ENCODE measurements at regions of chr12 and their contacts with region 1.

Region 1: DNA sequence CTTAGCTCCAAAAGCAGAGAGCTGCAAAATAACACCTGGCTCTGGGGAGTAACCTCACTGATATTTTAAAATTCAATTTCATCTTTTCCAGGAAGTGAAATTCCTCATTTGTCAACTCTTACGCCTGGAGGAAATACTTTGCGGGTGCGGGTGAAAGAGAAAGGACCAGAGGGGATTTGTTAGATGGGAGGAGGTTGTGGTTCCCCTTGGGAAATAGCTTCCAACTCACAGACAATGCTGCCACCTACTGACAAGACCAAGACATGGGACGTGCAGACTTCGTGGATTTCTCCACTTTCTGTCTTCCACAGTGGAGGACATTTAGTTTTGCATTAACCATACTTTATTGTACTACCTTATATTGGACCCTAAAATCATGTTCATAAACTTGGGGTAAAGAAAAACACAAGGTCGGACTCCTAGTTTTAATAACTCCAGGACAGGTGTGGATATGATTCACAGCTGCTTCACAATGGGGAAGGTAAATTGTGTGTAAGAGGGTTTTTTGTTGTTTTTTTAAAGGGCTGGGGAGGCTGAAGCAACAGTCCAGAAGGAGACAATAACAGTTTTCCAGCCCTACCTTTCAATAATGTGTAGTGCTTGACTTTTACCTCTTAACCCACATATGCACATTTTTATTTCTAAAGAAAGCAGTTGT is 10.8 kb downstream of the FBXL14 start:
- DNase-seq: peak; percentile 83
- ATAC-seq: peak; percentile 51
- H3K4me3 ChIP-seq: peak overlapping the region; percentile 38; the same call in 1 of the 2 replicates
- H3K27ac ChIP-seq: no peak overlapping the region
- H3K4me1 ChIP-seq: peaks cover 11% of the 10 kb centered on the region
- H3K27me3 ChIP-seq: no peaks in the 10 kb centered on the region
- CTCF ChIP-seq: peak; percentile 93

Region 2: DNA sequence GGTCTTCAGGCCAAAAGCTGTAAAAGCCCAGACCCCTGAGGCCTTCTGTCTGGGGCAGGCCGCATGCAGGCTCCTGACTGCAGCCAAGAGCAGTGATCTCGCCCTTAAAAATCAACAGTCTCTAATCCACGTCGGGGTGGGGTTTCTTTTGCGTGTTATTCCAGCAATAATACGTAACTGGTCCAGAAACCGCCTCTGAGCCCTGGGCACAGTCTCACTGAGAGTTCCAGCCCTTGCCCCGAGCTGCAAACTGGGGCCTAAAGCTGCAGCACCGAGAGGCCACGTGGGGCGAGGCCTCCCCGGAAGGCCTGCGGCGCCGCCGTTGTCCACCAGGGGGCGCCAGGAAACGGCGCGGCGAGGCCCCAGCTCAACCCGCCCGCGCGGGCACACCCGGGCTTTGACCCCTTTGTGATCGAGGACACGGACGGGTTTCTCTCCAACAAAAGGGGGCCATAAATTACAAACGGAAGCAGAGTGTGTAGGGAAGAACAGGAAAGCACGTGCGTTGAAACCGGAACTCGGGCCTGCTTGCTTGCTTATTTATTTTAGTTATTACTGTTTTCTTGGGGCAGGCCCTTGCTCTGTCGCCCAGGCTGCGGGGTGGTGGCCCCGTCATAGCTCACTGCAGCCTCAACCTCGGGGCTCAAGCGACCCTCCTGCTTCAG is 1007.5 kb before region 1 on chr12:
- CTCF ChIA-PET with region 1: no interaction called
- POLR2A ChIA-PET with region 1: no interaction called
- intact Hi-C with region 1: loop called (anchors 10 kb)
- DNase-seq: peak; percentile 79
- ATAC-seq: peak; percentile 54
- H3K4me3 ChIP-seq: no peak overlapping the region
- H3K27ac ChIP-seq: no peak overlapping the region
- H3K4me1 ChIP-seq: peaks cover 19% of the 10 kb centered on the region
- H3K27me3 ChIP-seq: no peaks in the 10 kb centered on the region
- CTCF ChIP-seq: peak; percentile 95

Region 3: GRCh38 chr12:1282670-1283335 is 300.7 kb before region 1 on chr12:
- CTCF ChIA-PET with region 1: no interaction called
- POLR2A ChIA-PET with region 1: no interaction called
- intact Hi-C with region 1: loop called (anchors 5 kb)
- DNase-seq: no peak
- ATAC-seq: no peak
- H3K4me3 ChIP-seq: no peak overlapping the region
- H3K27ac ChIP-seq: no peak overlapping the region
- H3K4me1 ChIP-seq: peaks cover 10% of the 10 kb centered on the region
- H3K27me3 ChIP-seq: no peaks in the 10 kb centered on the region
- CTCF ChIP-seq: no peak